ENCODE measurements at regions of chr17 and their contacts with region 1.

Region 1: DNA sequence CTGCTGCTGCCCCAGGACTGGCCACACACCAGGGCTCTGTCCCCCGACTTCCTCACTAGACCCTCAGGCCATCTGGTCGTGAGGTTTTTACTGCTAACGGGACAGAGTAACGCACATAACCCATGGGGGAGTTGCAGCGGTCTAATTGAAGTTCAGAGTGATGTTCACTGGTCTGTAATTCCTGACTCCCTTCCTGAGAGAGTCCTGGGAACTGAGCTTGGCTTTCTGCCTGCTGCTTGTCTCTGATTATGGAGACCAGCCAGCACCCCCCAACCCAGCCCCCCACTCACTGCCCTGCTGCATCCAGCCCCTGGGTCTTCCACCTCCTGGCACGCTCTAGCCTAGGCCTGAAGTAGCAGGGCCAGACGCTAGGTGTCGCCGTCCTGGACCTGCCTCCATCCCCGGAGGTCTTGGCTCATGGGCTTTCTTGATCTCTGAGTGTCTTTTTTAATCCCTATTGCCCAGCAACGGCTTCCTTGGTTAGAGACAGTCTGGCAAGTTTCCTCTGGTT is 192.9 kb downstream of the CCDC182 start:
- DNase-seq: no peak
- H3K4me3 ChIP-seq: no peak overlapping the region
- CTCF ChIP-seq: peak; percentile 28

Region 2: GRCh38 chr17:57541472-57542394 is 10.4 kb before region 1 on chr17:
- CTCF ChIA-PET with region 1: interaction called, 12 read pairs
- POLR2A ChIA-PET with region 1: interaction called, 4 read pairs
- DNase-seq: no peak
- H3K4me3 ChIP-seq: no peak overlapping the region
- CTCF ChIP-seq: no peak